ENCODE measurements at regions of chr2 and their contacts with region 1.

Region 1: GRCh38 chr2:201231781-201232466 is 28.4 kb upstream of the CASP8 start:
- DNase-seq: peak; percentile 94
- H3K4me3 Mint-ChIP-seq: peak overlapping the region; percentile 49
- H3K27ac Mint-ChIP-seq: peak overlapping the region; percentile 98
- H3K4me1 Mint-ChIP-seq: peaks cover 42% of the 10 kb centered on the region
- H3K27me3 Mint-ChIP-seq: no peaks in the 10 kb centered on the region

Region 2: DNA sequence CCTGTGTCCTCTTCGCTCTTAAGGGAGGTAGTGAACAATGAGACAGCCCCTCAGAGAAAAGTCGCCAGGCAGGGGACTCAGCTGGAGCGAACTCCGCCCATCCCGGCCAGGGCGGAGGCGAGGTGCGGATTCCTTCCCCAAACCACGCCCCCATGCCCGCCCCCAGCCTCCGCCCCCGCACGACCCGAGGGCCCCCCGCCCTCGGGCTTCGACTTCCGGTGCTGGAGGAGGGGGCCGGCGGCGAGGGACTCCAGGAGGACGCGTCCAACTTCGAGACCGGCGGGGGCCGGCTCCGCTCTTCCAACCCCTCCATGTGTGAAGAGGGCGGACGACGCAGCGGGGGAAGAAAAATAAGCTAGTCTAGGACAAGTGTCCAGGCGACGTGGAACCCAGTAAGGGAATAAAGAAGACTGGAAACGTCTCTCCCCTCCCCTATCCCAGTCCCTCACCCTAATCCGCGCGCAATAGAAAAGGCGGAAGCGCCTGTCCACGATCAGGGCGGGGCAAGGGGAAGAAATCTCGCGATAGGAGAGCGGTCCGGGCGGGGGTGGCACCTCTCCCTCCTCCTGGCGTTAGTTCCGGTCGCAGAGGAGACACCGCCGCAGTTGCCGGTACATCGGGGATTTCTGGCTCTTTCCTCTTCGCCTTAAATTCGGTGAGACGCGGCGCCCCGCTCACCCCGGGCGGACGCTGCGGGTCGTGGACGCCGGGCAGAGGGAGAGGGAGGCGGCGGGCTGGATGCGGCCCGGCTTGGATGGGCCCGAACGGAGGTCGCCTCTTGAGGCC is 420.4 kb before region 1 on chr2 and contains the start of gene BZW1:
- CTCF ChIA-PET with region 1: interaction called, 3 read pairs
- POLR2A ChIA-PET with region 1: no interaction called
- intact Hi-C with region 1: loop called (anchors 5 kb)
- DNase-seq: peak; percentile 98
- H3K4me3 Mint-ChIP-seq: peak within 1 kb of the TSS; percentile 100
- H3K27ac Mint-ChIP-seq: peak within 1 kb of the TSS; percentile 100
- H3K4me1 Mint-ChIP-seq: peaks cover 44% of the 10 kb centered on the region
- H3K27me3 Mint-ChIP-seq: peaks cover 1% of the 10 kb centered on the region
- total RNA-seq, gene BZW1: 416 to 423 TPM

Region 3: DNA sequence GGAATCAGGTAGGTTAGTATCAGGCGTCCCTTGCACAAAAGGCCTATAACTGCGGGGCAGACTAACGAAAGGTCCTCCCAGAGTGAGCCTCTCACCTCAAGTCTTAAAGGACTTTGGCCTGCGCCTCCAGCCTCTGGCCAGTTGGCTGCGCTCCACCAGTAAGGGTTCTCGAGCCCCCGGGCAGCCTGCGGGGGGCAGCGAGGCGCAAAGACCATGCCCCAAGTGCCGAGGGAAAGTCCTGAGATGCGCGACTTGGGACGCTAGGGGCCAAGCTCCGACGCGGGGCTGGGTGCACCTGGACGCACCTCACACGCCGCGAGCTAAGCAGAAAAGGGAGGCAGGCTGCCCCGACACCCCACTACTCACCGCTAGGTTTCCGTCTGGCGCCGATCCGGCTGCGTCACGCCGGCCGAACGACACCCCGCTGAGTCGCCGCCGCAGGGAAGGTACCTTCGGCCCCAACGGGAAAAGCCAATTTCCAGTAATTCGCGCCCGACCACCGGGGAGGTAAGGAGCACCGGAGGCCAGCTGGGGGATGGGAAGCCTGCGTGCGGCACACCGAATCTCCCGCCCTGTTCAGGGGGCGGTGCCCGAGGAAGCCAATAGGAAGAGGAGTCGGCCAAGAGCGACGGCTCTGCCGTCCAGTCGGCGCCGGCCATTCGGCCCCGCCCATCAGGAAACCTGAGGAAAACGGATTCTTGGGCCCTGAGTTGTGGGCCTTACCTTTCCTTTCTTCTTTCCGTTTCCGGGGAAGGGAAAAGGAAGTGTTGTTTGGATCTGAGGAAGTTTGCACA is 268.6 kb before region 1 on chr2 and contains the start of gene ORC2:
- CTCF ChIA-PET with region 1: interaction called, 12 read pairs
- POLR2A ChIA-PET with region 1: no interaction called
- intact Hi-C with region 1: loop called (anchors 5 kb)
- DNase-seq: peak; percentile 95
- H3K4me3 Mint-ChIP-seq: peak within 1 kb of the TSS; percentile 89
- H3K27ac Mint-ChIP-seq: peak within 1 kb of the TSS; percentile 93
- H3K4me1 Mint-ChIP-seq: peaks cover 60% of the 10 kb centered on the region
- H3K27me3 Mint-ChIP-seq: no peaks in the 10 kb centered on the region
- total RNA-seq, gene ORC2: 53.0 to 65.1 TPM

Region 4: GRCh38 chr2:201144101-201145051 is 87.5 kb before region 1 on chr2:
- CTCF ChIA-PET with region 1: interaction called, 13 read pairs
- POLR2A ChIA-PET with region 1: interaction called, 3 read pairs
- intact Hi-C with region 1: no loop called
- DNase-seq: no peak
- H3K4me3 Mint-ChIP-seq: no peak overlapping the region
- H3K27ac Mint-ChIP-seq: peak overlapping the region; percentile 49
- H3K4me1 Mint-ChIP-seq: peaks cover 38% of the 10 kb centered on the region
- H3K27me3 Mint-ChIP-seq: no peaks in the 10 kb centered on the region

Region 5: DNA sequence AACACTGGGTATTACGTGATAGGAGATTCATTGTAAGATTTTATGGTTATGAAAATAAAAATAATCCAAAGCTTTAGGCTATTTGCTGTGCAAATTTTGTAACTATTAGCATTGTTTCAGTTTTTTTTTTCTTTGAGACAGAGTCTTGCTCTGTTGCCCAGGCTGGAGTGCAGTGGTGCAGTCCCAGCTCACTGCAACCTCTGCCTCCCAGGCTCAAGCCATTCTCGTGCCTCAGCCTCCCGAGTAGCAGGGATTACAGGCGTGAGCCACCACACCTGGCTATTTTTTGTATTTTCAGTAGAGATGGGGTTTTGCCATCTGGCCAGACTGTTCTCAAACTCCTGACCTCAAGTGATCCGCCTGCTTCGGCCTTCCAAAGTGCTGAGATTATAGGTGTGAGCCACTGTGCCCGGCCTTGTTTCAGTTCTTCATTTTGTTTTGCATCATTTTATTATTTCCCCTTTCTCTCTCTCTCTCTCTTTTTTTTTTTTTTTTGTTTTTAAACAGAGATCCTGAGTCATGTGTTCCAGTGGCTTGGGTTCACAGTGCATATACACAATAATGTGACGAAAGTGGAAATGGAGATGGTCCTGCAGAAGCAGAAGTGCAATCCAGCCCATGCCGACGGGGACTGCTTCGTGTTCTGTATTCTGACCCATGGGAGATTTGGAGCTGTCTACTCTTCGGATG is 23.2 kb before region 1 on chr2:
- CTCF ChIA-PET with region 1: interaction called, 15 read pairs
- POLR2A ChIA-PET with region 1: no interaction called
- intact Hi-C with region 1: loop called (anchors 1 kb)
- DNase-seq: no peak
- H3K4me3 Mint-ChIP-seq: no peak overlapping the region
- H3K27ac Mint-ChIP-seq: no peak overlapping the region
- H3K4me1 Mint-ChIP-seq: peaks cover 15% of the 10 kb centered on the region
- H3K27me3 Mint-ChIP-seq: no peaks in the 10 kb centered on the region

Region 6: GRCh38 chr2:201270293-201271001 is 38.5 kb after region 1 on chr2:
- CTCF ChIA-PET with region 1: interaction called, 120 read pairs
- POLR2A ChIA-PET with region 1: interaction called, 96 read pairs
- intact Hi-C with region 1: loop called (anchors 5 kb)
- DNase-seq: no peak
- H3K4me3 Mint-ChIP-seq: no peak overlapping the region
- H3K27ac Mint-ChIP-seq: no peak overlapping the region
- H3K4me1 Mint-ChIP-seq: peaks cover 82% of the 10 kb centered on the region
- H3K27me3 Mint-ChIP-seq: no peaks in the 10 kb centered on the region

Region 7: GRCh38 chr2:201642579-201643215 is 410.8 kb after region 1 on chr2:
- CTCF ChIA-PET with region 1: interaction called, 4 read pairs
- POLR2A ChIA-PET with region 1: no interaction called
- intact Hi-C with region 1: loop called (anchors 2 kb)
- DNase-seq: peak; percentile 89
- H3K4me3 Mint-ChIP-seq: peak overlapping the region; percentile 87
- H3K27ac Mint-ChIP-seq: peak overlapping the region; percentile 84
- H3K4me1 Mint-ChIP-seq: peaks cover 10% of the 10 kb centered on the region
- H3K27me3 Mint-ChIP-seq: no peaks in the 10 kb centered on the region

Region 8: GRCh38 chr2:201768918-201769317 is 537.0 kb after region 1 on chr2:
- CTCF ChIA-PET with region 1: no interaction called
- POLR2A ChIA-PET with region 1: no interaction called
- intact Hi-C with region 1: no loop called
- DNase-seq: no peak
- H3K4me3 Mint-ChIP-seq: no peak overlapping the region
- H3K27ac Mint-ChIP-seq: no peak overlapping the region
- H3K4me1 Mint-ChIP-seq: peaks cover 1% of the 10 kb centered on the region
- H3K27me3 Mint-ChIP-seq: no peaks in the 10 kb centered on the region